Heart left ventricle (tissue), 16 donors: ENCODE measurements at regions of chr15 and their contacts with region 1.

Region 1: GRCh38 chr15:50765195-50765973 is at the start of gene SPPL2A:
- DNase-seq: peak; percentile 87 to 94 (median 91)
- ATAC-seq: peak; percentile 65 to 93 (median 88)
- H3K4me3 ChIP-seq: peak within 1 kb of the TSS; percentile 31 to 97 (median 88)
- H3K27ac ChIP-seq: peak within 1 kb of the TSS; percentile 94 to 99 (median 98)
- H3K4me1 ChIP-seq: peaks cover 0 to 41% (median 19%) of the 10 kb centered on the region in 12 donors
- H3K27me3 ChIP-seq: no peaks in the 10 kb centered on the region
- CTCF ChIP-seq: no peak
- POLR2A ChIP-seq: peak in 1 of 2 donors; percentile 90
- total RNA-seq, gene SPPL2A: 71.3 to 231 (median 122) TPM

Region 2: GRCh38 chr15:50686468-50687301 is 78.7 kb before region 1 on chr15 and contains the start of gene TRPM7:
- intact Hi-C with region 1: loop called in 6 of 10 experiments (anchors 1 to 10 kb)
- DNase-seq: peak; percentile 90 to 95 (median 92)
- ATAC-seq: peak; percentile 80 to 97 (median 94)
- H3K4me3 ChIP-seq: peak within 1 kb of the TSS; percentile 64 to 98 (median 78)
- H3K27ac ChIP-seq: peak within 1 kb of the TSS; percentile 87 to 99 (median 94)
- H3K4me1 ChIP-seq: peaks cover 0 to 47% (median 25%) of the 10 kb centered on the region in 12 donors
- H3K27me3 ChIP-seq: no peaks in the 10 kb centered on the region
- CTCF ChIP-seq: peak in 2 of 12 donors; percentile 9 to 21
- POLR2A ChIP-seq: peak in 1 of 2 donors; percentile 73
- total RNA-seq, gene TRPM7: 25.8 to 49.3 (median 31.0) TPM

Region 3: GRCh38 chr15:50718700-50719125 is 46.7 kb before region 1 on chr15:
- intact Hi-C with region 1: loop called in 2 of 10 experiments (anchors 10 kb)
- DNase-seq: no peak
- ATAC-seq: peak in 1 of 4 donors; percentile 20
- H3K4me3 ChIP-seq: no peak overlapping the region
- H3K27ac ChIP-seq: peak overlapping the region in 1 of 12 donors; percentile 3
- H3K4me1 ChIP-seq: peaks cover 0 to 3% (median 0%) of the 10 kb centered on the region in 12 donors
- H3K27me3 ChIP-seq: no peaks in the 10 kb centered on the region
- CTCF ChIP-seq: no peak
- POLR2A ChIP-seq: no peak

Region 4: DNA sequence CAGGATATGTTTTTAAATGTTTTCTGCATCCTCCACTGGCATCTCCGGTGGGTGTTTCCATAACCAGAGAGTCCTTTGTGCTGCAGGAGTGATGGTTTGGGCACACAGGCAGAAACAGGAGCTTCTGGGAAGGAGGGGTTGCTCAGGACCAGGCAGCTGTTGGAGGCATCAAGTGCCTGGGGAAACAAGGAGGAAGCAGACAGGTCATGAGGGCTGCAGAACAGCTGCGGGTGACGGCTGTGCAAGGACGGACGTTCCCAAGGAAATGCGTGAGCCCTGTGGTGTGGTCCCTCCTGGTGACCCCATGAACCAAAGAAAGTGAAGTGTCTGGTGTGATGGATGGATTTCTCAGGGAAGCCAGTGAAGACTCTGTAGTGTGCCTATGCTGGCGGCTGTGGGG is 390.5 kb after region 1 on chr15:
- intact Hi-C with region 1: no loop called
- DNase-seq: peak in 1 of 5 donors; percentile 28
- ATAC-seq: peak in 3 of 4 donors; percentile 14 to 91 (median 33)
- H3K4me3 ChIP-seq: no peak overlapping the region
- H3K27ac ChIP-seq: peak overlapping the region in 1 of 12 donors; percentile 34
- H3K4me1 ChIP-seq: peaks cover 0 to 10% (median 0%) of the 10 kb centered on the region in 12 donors
- H3K27me3 ChIP-seq: peaks cover 0 to 7% (median 0%) of the 10 kb centered on the region in 9 donors
- CTCF ChIP-seq: no peak
- POLR2A ChIP-seq: no peak